ENCODE measurements at regions of chr17 and their contacts with region 1.

Region 1: DNA sequence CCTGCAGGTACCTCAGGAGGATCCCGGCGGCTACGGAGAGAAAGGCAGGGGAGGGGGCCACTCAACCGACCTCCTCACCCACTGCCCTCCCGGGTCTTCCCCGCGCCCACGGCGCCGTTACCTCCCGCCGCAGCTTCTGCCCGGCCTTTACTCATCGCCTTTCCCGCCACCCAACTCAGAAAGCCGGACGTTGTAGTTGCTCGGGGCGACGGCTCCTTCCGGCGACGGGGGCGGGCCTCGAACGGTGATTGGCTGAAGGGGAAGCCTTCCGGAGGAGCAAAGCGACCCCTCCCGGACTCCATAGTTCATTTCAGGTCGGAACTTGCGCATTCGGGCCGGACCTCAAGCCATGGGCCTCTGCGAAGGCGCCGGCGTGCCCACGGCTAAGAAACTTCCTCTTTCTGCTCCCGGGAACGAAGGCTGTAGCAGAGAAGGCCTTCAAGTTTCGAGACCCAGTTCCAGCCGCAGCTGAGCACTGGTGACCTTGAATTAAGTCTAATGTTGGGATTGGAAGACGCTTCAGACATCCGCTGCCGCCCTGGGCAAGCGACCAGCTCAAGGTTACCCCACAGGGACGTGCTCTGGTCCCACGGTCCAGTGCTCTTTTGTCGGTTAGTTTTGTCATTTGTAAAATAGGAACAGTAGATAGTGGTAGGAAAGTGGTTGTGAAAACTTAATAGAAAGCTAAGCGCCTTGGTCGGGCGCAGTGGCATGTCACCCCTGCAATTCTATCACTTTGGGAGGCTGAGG is at the start of gene PSMC3IP:
- DNase-seq: peak; percentile 96 to 99
- ATAC-seq: peak; percentile 90 to 95
- H3K4me3 ChIP-seq: peak within 1 kb of the TSS; percentile 73
- H3K27ac ChIP-seq: peak within 1 kb of the TSS; percentile 87 to 94
- H3K4me1 ChIP-seq: peaks cover 20% of the 10 kb centered on the region; the same call in 2 of the 3 replicates
- CTCF ChIP-seq: peak; percentile 37
- EP300 ChIP-seq: no peak
- POLR2A ChIP-seq: peak; percentile 82
- RAD21 ChIP-seq: 0 out of 5 replicates have a peak, but pooled peaks of 1 of the 2 experiments have one; percentile 14
- polyA plus RNA-seq, gene PSMC3IP: 17.8 and 26.1 TPM in 2 replicates

Region 2: GRCh38 chr17:42153919-42154742 is 423.6 kb before region 1 on chr17:
- CTCF ChIA-PET with region 1: no interaction called
- POLR2A ChIA-PET with region 1: no interaction called
- DNase-seq: no peak
- ATAC-seq: no peak; a peak in 1 of 6 replicates
- H3K4me3 ChIP-seq: peak overlapping the region; percentile 86
- H3K27ac ChIP-seq: peak overlapping the region; percentile 88 to 93
- H3K4me1 ChIP-seq: peaks cover 13% of the 10 kb centered on the region; the same call in 1 of the 3 replicates
- CTCF ChIP-seq: no peak
- EP300 ChIP-seq: no peak
- POLR2A ChIP-seq: no peak
- RAD21 ChIP-seq: no peak

Region 3: GRCh38 chr17:42548070-42548837 is 29.5 kb before region 1 on chr17:
- CTCF ChIA-PET with region 1: interaction called, 27 read pairs
- POLR2A ChIA-PET with region 1: interaction called, 12 read pairs
- DNase-seq: peak; percentile 90 to 96
- ATAC-seq: peak; percentile 77 to 92
- H3K4me3 ChIP-seq: peak overlapping the region; percentile 51
- H3K27ac ChIP-seq: peak overlapping the region; percentile 67 to 83
- H3K4me1 ChIP-seq: peaks cover 12% of the 10 kb centered on the region; the same call in 2 of the 3 replicates
- CTCF ChIP-seq: peak; percentile 78
- EP300 ChIP-seq: no peak
- POLR2A ChIP-seq: peak; percentile 56
- RAD21 ChIP-seq: peak; percentile 57 to 62; a peak in 4 of 5 replicates

Region 4: GRCh38 chr17:42609182-42609813 is 31.6 kb after region 1 on chr17 and contains the starts of genes RETREG3 and TUBG1:
- CTCF ChIA-PET with region 1: interaction called, 65 read pairs
- POLR2A ChIA-PET with region 1: interaction called, 12 read pairs
- DNase-seq: peak; percentile 99 to 100
- ATAC-seq: peak; percentile 89 to 94
- H3K4me3 ChIP-seq: peak within 1 kb of the TSS; percentile 90
- H3K27ac ChIP-seq: peak within 1 kb of the TSS; percentile 91 to 92
- H3K4me1 ChIP-seq: peaks cover 22% of the 10 kb centered on the region
- CTCF ChIP-seq: no peak
- EP300 ChIP-seq: no peak
- POLR2A ChIP-seq: peak; percentile 99
- RAD21 ChIP-seq: no peak
- polyA plus RNA-seq, gene RETREG3: 28.3 and 45.9 TPM in 2 replicates
- polyA plus RNA-seq, gene TUBG1: 73.3 and 79.3 TPM in 2 replicates

Region 5: GRCh38 chr17:42667123-42667951 is 89.6 kb after region 1 on chr17:
- CTCF ChIA-PET with region 1: interaction called, 394 read pairs
- POLR2A ChIA-PET with region 1: interaction called, 10 read pairs
- DNase-seq: peak; percentile 96 to 99
- ATAC-seq: peak; percentile 95 to 96
- H3K4me3 ChIP-seq: 0 out of 3 replicates have a peak overlapping the region, but pooled peaks have one; percentile 7
- H3K27ac ChIP-seq: peak overlapping the region; percentile 78
- H3K4me1 ChIP-seq: peaks cover 32% of the 10 kb centered on the region
- CTCF ChIP-seq: no peak
- EP300 ChIP-seq: no peak
- POLR2A ChIP-seq: no peak
- RAD21 ChIP-seq: peak in 1 of 2 experiments; percentile 8; a peak in 1 of 5 replicates

Region 6: GRCh38 chr17:42704837-42705494 is 127.3 kb after region 1 on chr17:
- CTCF ChIA-PET with region 1: interaction called, 43 read pairs
- POLR2A ChIA-PET with region 1: no interaction called
- DNase-seq: no peak
- ATAC-seq: no peak
- H3K4me3 ChIP-seq: no peak overlapping the region
- H3K27ac ChIP-seq: no peak overlapping the region
- H3K4me1 ChIP-seq: no peaks in the 10 kb centered on the region
- CTCF ChIP-seq: no peak
- EP300 ChIP-seq: no peak
- POLR2A ChIP-seq: no peak
- RAD21 ChIP-seq: no peak

Region 7: DNA sequence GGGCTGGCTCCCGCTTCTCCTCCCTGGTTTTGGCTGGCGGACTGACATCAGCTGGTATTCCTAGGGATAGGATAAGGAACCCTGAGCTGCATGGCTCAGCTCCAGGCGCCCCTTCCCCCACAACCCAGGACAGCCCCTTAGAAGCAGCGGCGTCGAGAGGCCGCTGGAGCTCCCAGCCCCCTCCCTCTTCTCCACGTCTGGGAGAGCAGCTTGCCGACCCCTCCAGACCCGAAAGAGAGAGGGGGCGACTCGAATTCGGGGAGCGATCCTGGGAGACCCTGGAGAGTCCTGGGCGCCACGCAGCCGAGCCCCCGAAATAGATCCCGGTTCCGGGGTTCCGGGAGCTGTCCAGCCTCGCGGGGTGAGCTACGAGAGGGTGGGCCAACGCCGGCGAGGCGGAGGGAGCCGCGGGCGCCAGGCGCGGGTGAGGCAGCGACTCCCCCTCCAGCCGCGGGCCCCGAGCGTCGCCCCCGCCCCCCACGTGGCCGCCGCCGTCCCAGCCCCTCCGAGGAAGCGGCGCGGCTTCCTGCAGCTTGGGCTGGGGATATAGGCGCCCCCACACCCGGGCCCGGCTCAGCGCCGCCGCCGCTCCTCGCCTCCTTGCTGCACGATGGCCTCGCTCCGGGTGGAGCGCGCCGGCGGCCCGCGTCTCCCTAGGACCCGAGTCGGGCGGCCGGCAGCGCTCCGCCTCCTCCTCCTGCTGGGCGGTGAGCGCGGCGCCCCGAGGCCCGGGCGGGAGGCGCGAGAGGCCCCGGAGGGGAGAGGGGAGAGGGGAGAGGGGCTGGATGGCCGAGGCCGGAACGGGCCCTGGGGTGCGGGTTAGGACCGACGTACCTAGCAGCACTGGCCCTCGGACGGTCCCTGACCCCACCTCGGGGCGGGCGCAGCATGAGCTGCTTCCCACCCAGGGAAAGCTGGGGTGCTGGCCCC is 183.2 kb after region 1 on chr17 and contains the start of gene RAMP2:
- CTCF ChIA-PET with region 1: interaction called, 96 read pairs
- POLR2A ChIA-PET with region 1: interaction called, 16 read pairs
- DNase-seq: peak in 1 of 2 experiments; percentile 41
- ATAC-seq: peak; percentile 53 to 65; a peak in 4 of 6 replicates
- H3K4me3 ChIP-seq: peak within 1 kb of the TSS; percentile 56
- H3K27ac ChIP-seq: peak within 1 kb of the TSS; percentile 75 to 82
- H3K4me1 ChIP-seq: peaks cover 15% of the 10 kb centered on the region
- CTCF ChIP-seq: no peak
- EP300 ChIP-seq: no peak
- POLR2A ChIP-seq: no peak
- RAD21 ChIP-seq: no peak
- polyA plus RNA-seq, gene RAMP2: 0.49 and 1.2 TPM in 2 replicates

Region 8: GRCh38 chr17:42814633-42815399 is 237.1 kb after region 1 on chr17:
- CTCF ChIA-PET with region 1: interaction called, 12 read pairs
- POLR2A ChIA-PET with region 1: no interaction called
- DNase-seq: no peak
- ATAC-seq: no peak
- H3K4me3 ChIP-seq: no peak overlapping the region
- H3K27ac ChIP-seq: no peak overlapping the region
- H3K4me1 ChIP-seq: no peaks in the 10 kb centered on the region; the same call in 1 of the 3 replicates
- CTCF ChIP-seq: no peak
- EP300 ChIP-seq: no peak
- POLR2A ChIP-seq: no peak
- RAD21 ChIP-seq: no peak

Measured in A549 (cell line).